ENCODE measurements at regions of chr17 and their contacts with region 1.

Region 1: DNA sequence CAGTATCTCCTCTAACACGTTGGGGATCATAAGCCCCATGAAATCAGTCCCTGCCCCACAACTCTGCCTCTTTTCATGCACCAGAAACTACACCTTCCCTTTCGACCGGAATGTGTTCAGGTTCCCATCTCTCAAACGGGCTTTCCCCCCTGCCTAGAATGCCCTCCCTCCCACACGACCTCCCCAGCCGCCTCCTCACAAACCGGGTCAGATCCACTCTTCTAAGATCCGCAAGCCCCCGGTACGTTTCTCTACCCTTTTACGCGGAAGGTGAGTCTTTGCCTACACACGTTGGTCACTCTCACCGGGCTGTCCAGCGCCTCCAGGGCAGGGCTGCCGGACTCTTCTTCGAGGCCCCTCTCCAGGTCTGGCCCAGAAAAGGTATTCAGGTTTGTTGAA is 708 bp downstream of the DHX33 start:
- DNase-seq: no peak
- H3K4me3 ChIP-seq: peak overlapping the region; percentile 98 to 100 (median 98)
- H3K27ac ChIP-seq: peak overlapping the region; percentile 70
- H3K4me1 ChIP-seq: peaks cover 0 to 9% (median 6%) of the 10 kb centered on the region in 4 experiments; a peak in 3 of 7 replicates
- H3K27me3 ChIP-seq: no peaks in the 10 kb centered on the region
- CTCF ChIP-seq: no peak
- EP300 ChIP-seq: no peak
- POLR2A ChIP-seq: no peak
- RAD21 ChIP-seq: no peak

Region 2: DNA sequence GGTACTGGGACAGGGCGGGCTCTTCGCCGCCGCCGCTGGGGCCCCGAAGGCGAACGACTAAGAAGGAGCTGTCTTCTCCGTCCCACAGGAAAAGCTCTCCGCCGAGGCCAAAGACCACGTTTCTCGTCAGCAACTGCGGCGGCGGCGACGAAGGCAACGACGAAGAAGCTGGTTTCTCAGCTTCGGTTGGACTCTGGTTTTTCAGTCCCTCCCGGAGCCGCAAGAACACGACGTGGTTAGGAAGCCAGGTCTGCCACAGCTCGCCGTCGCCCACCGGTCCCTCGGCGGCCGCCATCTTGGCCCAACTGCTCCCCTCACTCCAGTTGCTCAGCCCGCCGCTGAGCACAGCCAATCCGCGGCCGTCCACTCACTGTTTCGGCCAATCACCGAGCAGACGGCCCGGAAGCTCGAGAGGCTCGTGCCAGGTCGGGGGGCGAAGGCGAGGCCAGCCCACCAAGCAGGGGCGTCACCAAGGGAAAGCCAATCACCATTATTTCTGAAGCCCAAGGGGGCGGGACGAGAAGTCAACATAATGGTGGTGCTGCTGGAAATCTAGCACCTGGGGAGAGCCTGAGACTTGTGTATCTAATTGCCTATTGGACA is 48.6 kb before region 1 on chr17 and contains the start of gene NUP88:
- CTCF ChIA-PET with region 1: no interaction called
- POLR2A ChIA-PET with region 1: interaction called, 22 read pairs
- DNase-seq: peak; percentile 91 to 93
- H3K4me3 ChIP-seq: peak within 1 kb of the TSS; percentile 67 to 99 (median 97)
- H3K27ac ChIP-seq: peak within 1 kb of the TSS; percentile 95
- H3K4me1 ChIP-seq: peaks cover 0 to 4% (median 2%) of the 10 kb centered on the region in 4 experiments; a peak in 3 of 7 replicates
- H3K27me3 ChIP-seq: no peaks in the 10 kb centered on the region
- CTCF ChIP-seq: no peak
- EP300 ChIP-seq: no peak
- POLR2A ChIP-seq: peak; percentile 67 to 94
- RAD21 ChIP-seq: no peak
- total RNA-seq, gene NUP88: 102 and 105 TPM in 2 replicates

Region 3: GRCh38 chr17:5429191-5429887 is 38.7 kb before region 1 on chr17:
- CTCF ChIA-PET with region 1: interaction called, 3 read pairs
- POLR2A ChIA-PET with region 1: interaction called, 19 read pairs
- DNase-seq: no peak
- H3K4me3 ChIP-seq: no peak overlapping the region
- H3K27ac ChIP-seq: no peak overlapping the region
- H3K4me1 ChIP-seq: no peaks in the 10 kb centered on the region
- H3K27me3 ChIP-seq: no peaks in the 10 kb centered on the region
- CTCF ChIP-seq: no peak
- EP300 ChIP-seq: no peak
- POLR2A ChIP-seq: 0 out of 3 replicates have a peak, but pooled peaks of 1 of the 2 experiments have one; percentile 32
- RAD21 ChIP-seq: no peak

Region 4: DNA sequence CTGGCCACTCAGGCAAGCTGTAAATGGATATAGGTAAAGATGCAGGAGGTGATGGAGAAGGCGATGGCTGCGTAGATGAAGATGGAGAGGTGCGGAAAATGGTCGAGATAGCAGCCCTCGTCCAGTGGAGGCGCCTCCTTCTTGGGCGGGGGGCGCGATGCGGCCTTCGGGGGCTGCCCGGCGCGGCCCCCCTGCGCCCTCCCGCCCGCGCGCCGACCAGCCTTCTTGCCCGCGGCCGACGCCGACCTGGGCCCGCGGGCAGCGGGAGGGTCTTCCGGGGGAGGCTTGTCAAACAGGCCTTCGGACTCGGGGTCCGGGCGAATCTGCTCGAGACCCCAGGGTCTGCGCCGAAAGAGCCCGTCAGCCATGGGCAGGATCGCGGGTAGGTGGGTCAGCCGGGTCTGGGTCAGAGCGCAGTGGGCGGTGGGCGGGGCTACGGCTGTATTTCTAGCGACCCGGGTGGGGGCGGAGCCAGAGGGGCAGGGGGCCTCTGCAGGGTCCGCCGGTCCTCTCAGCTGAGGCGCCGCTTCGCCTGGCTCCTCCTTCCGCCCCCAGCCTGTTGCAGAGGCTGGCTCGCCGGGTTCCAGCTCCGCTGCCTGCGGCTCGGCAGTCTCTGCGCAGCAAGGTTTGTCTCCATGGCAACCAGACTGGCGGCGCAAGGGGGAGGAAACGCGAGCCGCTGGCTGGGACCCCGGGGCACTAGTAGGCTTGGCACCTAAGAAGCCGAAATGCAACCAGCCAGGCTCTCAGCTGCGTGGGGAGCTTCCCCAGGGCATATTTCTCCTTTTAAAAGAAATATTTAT is 32.7 kb after region 1 on chr17:
- CTCF ChIA-PET with region 1: no interaction called
- POLR2A ChIA-PET with region 1: interaction called, 16 read pairs
- DNase-seq: peak; percentile 95 to 98
- H3K4me3 ChIP-seq: peak overlapping the region; percentile 54 to 66 (median 61)
- H3K27ac ChIP-seq: no peak overlapping the region
- H3K4me1 ChIP-seq: peaks cover 0 to 8% (median 4%) of the 10 kb centered on the region in 4 experiments; a peak in 3 of 7 replicates
- H3K27me3 ChIP-seq: peaks cover 7 to 39% (median 25%) of the 10 kb centered on the region in 4 experiments
- CTCF ChIP-seq: no peak
- EP300 ChIP-seq: no peak
- POLR2A ChIP-seq: peak in 1 of 2 experiments; percentile 66; a peak in 2 of 3 replicates
- RAD21 ChIP-seq: no peak

Measured in H1 (cell line).